Right lobe of liver (tissue), 6 donors: ENCODE measurements at regions of chr12 and their contacts with region 1.

Region 1: DNA sequence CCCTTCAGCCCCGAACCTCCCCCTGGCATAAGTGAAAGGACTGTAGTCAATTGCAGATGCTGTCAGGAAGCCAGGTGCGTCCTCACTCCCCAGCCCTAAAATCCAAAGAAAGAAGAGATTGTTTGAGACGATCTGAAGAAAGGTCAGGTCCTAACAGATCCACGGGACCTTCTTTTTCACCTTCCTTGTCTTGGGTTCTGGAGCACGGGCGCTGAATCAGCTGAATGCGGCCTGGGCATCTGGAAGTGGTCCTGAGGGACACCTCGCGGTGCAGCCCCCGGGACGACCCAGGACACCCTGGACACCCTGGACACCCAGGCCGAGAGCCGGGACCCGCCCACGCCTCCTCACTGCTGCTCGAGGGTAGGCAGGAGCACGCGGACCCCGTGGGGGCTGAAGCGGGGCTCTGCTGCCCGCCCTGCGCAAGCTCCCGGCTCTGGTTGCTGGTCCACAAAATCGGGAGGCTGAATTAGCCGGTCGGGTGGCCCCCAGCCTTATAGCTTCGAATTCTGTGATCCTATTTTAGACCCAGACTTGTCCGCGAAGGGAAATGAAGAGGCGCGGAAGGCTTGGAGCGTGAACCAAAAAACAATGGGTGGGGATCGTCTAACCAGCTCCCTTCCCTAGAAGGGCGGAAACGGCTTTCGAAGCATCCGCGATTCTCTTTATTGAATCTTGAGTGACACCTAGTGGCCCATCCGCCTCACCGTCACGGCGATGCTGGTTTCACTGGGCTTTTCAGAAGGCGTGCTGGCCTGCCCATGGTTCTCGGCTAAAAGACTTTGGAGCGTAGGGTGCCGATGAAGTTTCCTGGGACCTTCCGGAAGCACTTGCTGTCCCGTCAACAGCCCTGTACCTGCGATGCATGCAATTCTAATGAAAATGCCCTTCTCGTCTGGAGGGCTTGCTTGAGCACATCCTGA is 46.4 kb upstream of the PLXNC1 start:
- DNase-seq: peak; percentile 80 to 81 (median 81)
- ATAC-seq: peak; percentile 92 to 95 (median 92)
- H3K4me3 ChIP-seq: peak overlapping the region; percentile 37 to 61 (median 45)
- H3K27ac ChIP-seq: no peak overlapping the region
- H3K4me1 ChIP-seq: peaks cover 0 to 10% (median 0%) of the 10 kb centered on the region in 4 donors
- H3K27me3 ChIP-seq: no peaks in the 10 kb centered on the region
- CTCF ChIP-seq: peak; percentile 77 to 87 (median 80)
- POLR2A ChIP-seq: no peak

Region 2: GRCh38 chr12:93502802-93503623 is 599.0 kb before region 1 on chr12:
- intact Hi-C with region 1: loop called (anchors 5 to 10 kb)
- DNase-seq: no peak
- ATAC-seq: peak; percentile 51 to 64 (median 59)
- H3K4me3 ChIP-seq: no peak overlapping the region
- H3K27ac ChIP-seq: no peak overlapping the region
- H3K4me1 ChIP-seq: no peaks in the 10 kb centered on the region
- H3K27me3 ChIP-seq: no peaks in the 10 kb centered on the region
- CTCF ChIP-seq: peak; percentile 74 to 86 (median 79)
- POLR2A ChIP-seq: no peak

Region 3: DNA sequence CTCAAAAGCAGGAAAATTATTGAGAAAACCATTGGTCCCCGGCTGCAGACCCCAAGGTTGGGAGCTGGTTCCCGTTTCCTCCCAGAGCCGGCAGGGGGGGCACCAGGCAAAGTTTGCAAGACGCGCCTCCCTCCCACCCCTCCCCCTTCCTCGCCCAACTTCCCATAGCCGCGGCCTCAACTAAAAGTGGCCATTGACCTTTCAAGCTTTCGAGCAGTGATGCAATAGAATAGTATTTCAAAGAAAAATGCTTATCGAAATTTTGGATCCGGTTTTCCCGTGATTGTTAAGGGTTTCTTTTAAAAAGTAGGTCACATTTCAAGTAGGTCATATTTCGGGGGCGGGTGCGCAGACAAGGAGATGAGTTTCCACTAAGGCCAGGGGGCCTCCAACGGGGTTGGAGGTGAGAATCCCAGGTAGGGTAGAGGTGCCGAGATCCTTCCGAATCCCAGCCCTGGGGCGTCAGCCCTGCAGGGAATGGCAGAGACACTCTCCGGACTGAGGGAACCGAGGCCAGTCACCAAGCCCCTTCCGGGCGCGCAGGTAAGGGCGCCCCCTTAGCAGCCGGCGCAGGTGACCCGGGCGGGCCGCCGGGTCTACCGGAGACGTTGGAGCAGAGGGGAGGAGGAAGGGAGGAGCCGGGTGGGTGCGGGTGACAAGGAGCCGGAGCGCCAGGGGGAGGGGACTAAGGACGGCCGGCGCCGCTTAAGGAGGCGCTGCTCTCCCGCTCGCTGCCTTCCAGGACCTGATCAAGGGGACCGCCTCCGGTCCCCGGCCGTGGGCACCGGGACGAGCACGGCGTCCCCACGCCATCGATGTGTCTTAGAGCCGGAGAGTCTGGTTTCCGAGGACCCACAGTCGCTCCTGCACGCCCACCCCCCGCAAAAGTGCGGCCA is 532.1 kb before region 1 on chr12:
- intact Hi-C with region 1: loop called in 1 of 2 experiments (anchors 5 kb)
- DNase-seq: peak; percentile 80 to 89 (median 89)
- ATAC-seq: peak; percentile 51 to 64 (median 56)
- H3K4me3 ChIP-seq: peak overlapping the region; percentile 72 to 94 (median 90)
- H3K27ac ChIP-seq: peak overlapping the region; percentile 93 to 96 (median 95)
- H3K4me1 ChIP-seq: peaks cover 0 to 20% (median 7%) of the 10 kb centered on the region in 4 donors
- H3K27me3 ChIP-seq: no peaks in the 10 kb centered on the region
- CTCF ChIP-seq: peak; percentile 57 to 77 (median 72)
- POLR2A ChIP-seq: no peak

Region 4: DNA sequence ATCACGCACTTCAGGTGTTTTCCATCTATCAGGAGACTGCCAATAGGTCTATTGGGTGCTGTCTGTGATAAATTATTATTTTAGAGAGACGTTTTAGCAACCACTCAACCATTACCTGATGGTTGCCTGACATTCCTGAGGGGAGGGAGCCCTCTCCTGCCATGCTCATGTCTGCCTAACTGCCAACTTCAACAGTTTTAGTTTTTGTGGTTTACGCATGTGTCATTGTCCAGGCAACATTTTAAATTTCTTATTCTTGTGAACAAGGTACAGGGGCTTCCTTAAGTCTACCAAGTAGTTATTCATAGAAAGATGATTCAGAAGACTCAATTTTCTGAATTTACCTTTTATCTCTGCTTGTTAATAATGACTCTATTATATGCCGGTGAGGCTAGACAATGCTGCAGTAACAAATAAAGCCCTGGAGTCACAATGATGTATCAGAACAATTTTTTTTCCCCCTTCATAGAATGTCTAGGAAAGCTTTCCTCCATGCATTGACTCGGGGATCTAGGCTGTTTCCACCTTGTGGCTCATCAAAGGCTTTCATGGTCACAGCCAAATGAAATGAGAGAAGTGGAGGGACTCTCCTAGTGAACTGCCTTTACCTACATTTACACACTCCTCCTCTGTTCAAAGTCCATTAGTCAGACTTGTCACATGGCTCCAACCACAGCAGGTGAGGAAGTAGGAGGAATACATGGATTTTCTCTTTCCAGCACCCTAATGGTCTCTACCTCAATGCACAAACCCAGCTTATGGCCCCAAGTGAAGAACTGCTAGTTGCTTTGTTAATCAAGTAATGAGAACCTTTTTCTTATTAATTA is 199.1 kb before region 1 on chr12:
- intact Hi-C with region 1: no loop called
- DNase-seq: no peak
- ATAC-seq: peak; percentile 60 to 93 (median 68)
- H3K4me3 ChIP-seq: no peak overlapping the region
- H3K27ac ChIP-seq: no peak overlapping the region
- H3K4me1 ChIP-seq: peaks cover 0 to 4% (median 0%) of the 10 kb centered on the region in 4 donors
- H3K27me3 ChIP-seq: no peaks in the 10 kb centered on the region
- CTCF ChIP-seq: no peak
- POLR2A ChIP-seq: no peak

Region 5: GRCh38 chr12:93979189-93979588 is 122.8 kb before region 1 on chr12:
- intact Hi-C with region 1: loop called in 1 of 2 experiments (anchors 10 kb)
- DNase-seq: no peak
- ATAC-seq: peak; percentile 77 to 88 (median 82)
- H3K4me3 ChIP-seq: no peak overlapping the region
- H3K27ac ChIP-seq: no peak overlapping the region
- H3K4me1 ChIP-seq: no peaks in the 10 kb centered on the region
- H3K27me3 ChIP-seq: no peaks in the 10 kb centered on the region
- CTCF ChIP-seq: peak; percentile 61 to 66 (median 64)
- POLR2A ChIP-seq: no peak